Posterior vena cava (tissue), 2 donors: ENCODE measurements at regions of chr9 and their contacts with region 1.

Region 1: DNA sequence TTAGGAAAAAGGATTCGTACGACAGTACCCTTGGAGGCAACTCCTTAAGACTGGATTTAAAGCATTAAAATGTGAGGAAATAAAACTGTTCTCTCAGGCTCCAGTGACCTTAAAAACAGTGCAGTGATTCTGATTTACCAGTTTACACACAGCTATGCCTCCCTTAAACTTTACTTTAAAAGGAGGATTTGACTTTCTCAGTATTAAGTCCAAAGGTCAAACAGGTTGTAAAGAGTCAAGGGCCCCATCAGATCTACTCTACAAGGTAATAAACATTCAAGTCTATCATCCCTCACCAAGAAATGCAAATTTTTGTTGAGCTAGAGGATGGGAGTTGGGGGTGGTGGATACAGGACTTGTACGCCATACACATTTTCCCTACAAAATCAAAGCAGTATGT is 75.2 kb downstream of the ELAVL2 start:
- DNase-seq: no peak

Region 2: GRCh38 chr9:23686257-23686656 is 64.6 kb before region 1 on chr9:
- intact Hi-C with region 1: loop called in 1 of 2 experiments (anchors 2 kb)
- DNase-seq: no peak